ENCODE measurements at regions of chr2 and their contacts with region 1.

Region 1: DNA sequence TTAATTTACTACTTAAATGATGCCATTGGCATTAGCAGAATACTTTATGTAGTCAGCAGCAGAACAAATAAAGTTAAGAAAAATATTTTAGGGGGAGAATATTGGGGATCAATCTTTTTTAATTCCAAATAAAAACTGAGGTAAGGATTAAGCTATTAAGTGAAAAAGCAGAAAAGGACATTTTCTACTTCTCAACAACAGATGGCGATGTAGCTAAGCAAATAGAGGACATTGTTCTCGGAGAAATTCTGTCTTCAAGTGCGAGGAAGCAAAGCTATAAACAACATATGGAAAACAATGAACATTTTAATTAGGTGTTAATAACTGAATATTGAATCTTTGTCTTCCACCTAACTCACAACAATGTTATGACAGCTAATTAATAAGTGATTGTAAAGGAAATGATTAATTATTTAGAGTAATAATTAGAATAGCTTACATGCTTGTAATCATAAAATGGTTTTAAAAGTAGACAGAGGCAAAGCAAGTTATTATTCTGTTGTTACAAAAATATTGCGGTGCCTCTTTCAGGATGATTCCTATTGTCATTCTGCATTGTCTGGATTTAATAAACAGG is 32.9 kb upstream of the CCDC93 start:
- DNase-seq: peak in 1 of 35 experiments; percentile 56
- ATAC-seq: no peak
- H3K4me3 ChIP-seq: no peak overlapping the region
- H3K4me3 Mint-ChIP-seq: no peak overlapping the region
- H3K27ac ChIP-seq: no peak overlapping the region
- H3K27ac Mint-ChIP-seq: no peak overlapping the region
- H3K4me1 ChIP-seq: no peaks in the 10 kb centered on the region
- H3K4me1 Mint-ChIP-seq: peaks cover 0 to 6% (median 0%) of the 10 kb centered on the region in 3 donors
- H3K27me3 ChIP-seq: peaks cover 4 to 5% of the 10 kb centered on the region in 2 experiments
- H3K27me3 Mint-ChIP-seq: peaks cover 56 to 71% of the 10 kb centered on the region in 2 donors

Region 2: DNA sequence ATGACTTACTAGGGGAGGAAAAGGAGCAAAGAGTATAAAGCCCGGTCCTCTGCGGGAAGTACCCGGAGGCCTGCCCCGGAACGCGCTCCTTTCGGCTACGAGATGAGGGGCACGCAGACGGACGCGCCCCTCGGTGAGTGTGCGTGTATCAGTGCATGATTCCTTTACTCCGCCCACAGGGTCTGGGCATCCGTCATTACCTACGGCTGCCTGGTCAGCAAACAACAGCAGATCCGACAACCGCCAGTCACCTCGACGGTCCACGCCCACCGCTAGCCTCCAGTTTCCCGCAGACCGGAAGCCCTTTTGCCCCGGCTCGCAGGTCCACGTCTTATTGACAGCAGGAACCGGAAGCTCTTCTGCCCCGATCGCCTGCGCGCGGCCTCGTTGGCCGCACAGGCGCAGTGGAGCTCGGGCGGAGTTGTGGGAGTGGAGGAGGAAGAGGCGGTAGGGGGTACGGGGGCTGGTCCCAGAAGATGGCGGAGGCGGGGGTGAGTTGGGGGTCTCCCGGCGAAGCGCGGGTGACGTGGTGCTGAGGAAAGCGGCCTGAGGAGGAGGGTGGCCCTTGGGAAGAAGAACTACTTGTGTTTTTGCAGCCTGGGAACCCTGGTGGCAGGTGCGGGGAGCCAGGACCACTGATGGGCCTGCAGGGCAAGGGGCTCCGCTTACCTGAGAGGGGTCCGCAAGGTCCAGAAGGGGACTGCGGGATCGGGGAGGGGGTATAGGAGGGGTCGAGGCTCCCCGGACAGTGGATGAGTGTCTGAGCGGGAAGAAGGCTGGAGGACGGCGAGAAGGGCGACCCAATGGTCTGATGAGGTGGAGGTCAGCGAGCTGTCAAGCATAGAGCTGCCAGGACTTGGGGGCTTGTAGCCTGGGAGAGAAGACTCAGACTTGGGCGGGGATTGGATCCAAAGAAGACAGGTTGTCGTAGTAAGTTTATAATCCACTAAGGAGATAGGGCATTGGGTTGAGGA is 41.6 kb after region 1 on chr2 and contains the start of gene INSIG2:
- CTCF ChIA-PET with region 1: interaction called in 1 of 2 experiments, 20 read pairs
- POLR2A ChIA-PET with region 1: no interaction called
- DNase-seq: peak; percentile 76 to 91 (median 82)
- ATAC-seq: peak; percentile 93 to 95 (median 94)
- H3K4me3 ChIP-seq: peak within 1 kb of the TSS; percentile 69 to 94
- H3K4me3 Mint-ChIP-seq: peak within 1 kb of the TSS; percentile 84 to 91 (median 90)
- H3K27ac ChIP-seq: peak within 1 kb of the TSS; percentile 54
- H3K27ac Mint-ChIP-seq: peak within 1 kb of the TSS; percentile 77 to 91
- H3K4me1 ChIP-seq: peaks cover 12 to 14% of the 10 kb centered on the region in 2 experiments
- H3K4me1 Mint-ChIP-seq: peaks cover 7 to 32% (median 28%) of the 10 kb centered on the region in 3 donors
- H3K27me3 ChIP-seq: no peaks in the 10 kb centered on the region
- H3K27me3 Mint-ChIP-seq: peaks cover 0 to 2% of the 10 kb centered on the region in 2 donors
- total RNA-seq, gene INSIG2: 13.8 to 18.9 (median 16.9) TPM

Measured in T-cell (primary cell).